Gastrocnemius medialis (tissue), 4 donors: ENCODE measurements at regions of chr4 and their contacts with region 1.

Region 1: DNA sequence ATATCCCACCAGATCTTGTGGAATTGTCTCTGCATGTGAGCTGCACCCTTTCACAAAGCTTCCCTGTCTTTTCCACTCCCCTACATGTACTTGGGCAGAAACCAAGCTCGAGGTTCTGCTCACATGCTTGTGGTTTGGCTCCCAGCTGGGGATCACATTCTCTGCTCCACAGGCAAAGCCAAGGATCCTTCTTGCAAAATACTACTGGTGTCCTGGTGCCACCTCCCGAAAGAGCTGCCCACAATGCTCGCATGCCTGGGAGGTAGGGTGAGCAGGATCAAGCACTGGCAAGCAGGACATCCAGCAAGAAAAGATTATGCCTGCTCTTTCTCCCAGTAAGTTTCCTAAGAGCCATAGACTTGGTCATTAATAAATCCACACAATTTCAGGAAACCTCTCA is 45.1 kb upstream of the PPARGC1A start:
- DNase-seq: peak; percentile 94 to 98
- ATAC-seq: peak; percentile 80 to 84
- H3K4me3 ChIP-seq: no peak overlapping the region
- H3K27ac ChIP-seq: peak overlapping the region; percentile 83 to 92 (median 90)
- H3K4me1 ChIP-seq: peaks cover 29 to 67% of the 10 kb centered on the region in 2 donors
- H3K27me3 ChIP-seq: no peaks in the 10 kb centered on the region
- CTCF ChIP-seq: no peak
- POLR2A ChIP-seq: peak; percentile 51 to 67

Region 2: GRCh38 chr4:23373261-23373660 is 561.7 kb before region 1 on chr4:
- in situ Hi-C with region 1: loop called in 1 of 4 experiments (anchors 25 kb)
- intact Hi-C with region 1: loop called (anchors 5 kb)
- DNase-seq: peak; percentile 41 to 65
- ATAC-seq: peak; percentile 67 to 76
- H3K4me3 ChIP-seq: no peak overlapping the region
- H3K27ac ChIP-seq: peak overlapping the region; percentile 75 to 82 (median 80)
- H3K4me1 ChIP-seq: peaks cover 28 to 32% of the 10 kb centered on the region in 2 donors
- H3K27me3 ChIP-seq: no peaks in the 10 kb centered on the region
- CTCF ChIP-seq: peak in 1 of 5 experiments; percentile 9
- POLR2A ChIP-seq: peak in 1 of 2 donors; percentile 17

Region 3: GRCh38 chr4:23392860-23393458 is 542.0 kb before region 1 on chr4:
- in situ Hi-C with region 1: loop called in 1 of 4 experiments (anchors 25 kb)
- intact Hi-C with region 1: loop called (anchors 5 kb)
- DNase-seq: peak; percentile 47 to 66
- ATAC-seq: peak; percentile 70 to 71
- H3K4me3 ChIP-seq: peak overlapping the region; percentile 38 to 53 (median 50)
- H3K27ac ChIP-seq: peak overlapping the region; percentile 76 to 89 (median 88)
- H3K4me1 ChIP-seq: peaks cover 45 to 52% of the 10 kb centered on the region in 2 donors
- H3K27me3 ChIP-seq: no peaks in the 10 kb centered on the region
- CTCF ChIP-seq: no peak
- POLR2A ChIP-seq: peak in 1 of 2 donors; percentile 37

Region 4: DNA sequence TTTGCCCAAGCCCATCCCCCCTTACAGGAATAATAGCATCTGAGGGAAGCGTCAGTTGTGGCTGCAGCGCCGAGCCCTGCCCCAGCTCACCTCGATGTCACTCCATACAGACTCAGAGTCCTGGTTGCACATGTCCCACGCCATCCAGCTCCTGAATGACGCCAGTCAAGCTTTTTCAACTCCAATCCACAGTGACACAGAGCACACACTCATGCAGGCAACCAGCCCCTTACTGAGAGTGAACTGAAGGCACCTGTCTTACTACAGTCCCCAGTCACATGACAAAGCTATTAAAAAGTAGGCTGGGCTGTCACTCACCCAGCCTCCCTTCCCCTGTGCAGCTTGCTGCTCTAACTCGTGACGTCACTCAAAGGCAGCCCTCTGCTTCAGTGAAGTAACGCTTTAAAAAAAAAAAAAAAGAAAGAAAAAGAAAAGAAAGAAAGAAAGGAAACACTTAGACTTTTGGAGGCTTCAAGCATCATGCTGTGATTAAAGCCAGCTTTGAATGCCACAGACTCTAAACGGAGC is 45.0 kb before region 1 on chr4 and contains the start of gene PPARGC1A:
- in situ Hi-C with region 1: no loop called
- intact Hi-C with region 1: loop called (anchors 1 kb)
- DNase-seq: peak; percentile 86 to 94
- ATAC-seq: peak; percentile 80 to 84
- H3K4me3 ChIP-seq: peak within 1 kb of the TSS; percentile 65 to 77 (median 69)
- H3K27ac ChIP-seq: peak within 1 kb of the TSS; percentile 84 to 99 (median 90)
- H3K4me1 ChIP-seq: peaks cover 27 to 42% of the 10 kb centered on the region in 2 donors
- H3K27me3 ChIP-seq: no peaks in the 10 kb centered on the region
- CTCF ChIP-seq: no peak
- POLR2A ChIP-seq: peak; percentile 96 to 98
- total RNA-seq, gene PPARGC1A: 30.6 to 68.9 (median 52.3) TPM

Region 5: DNA sequence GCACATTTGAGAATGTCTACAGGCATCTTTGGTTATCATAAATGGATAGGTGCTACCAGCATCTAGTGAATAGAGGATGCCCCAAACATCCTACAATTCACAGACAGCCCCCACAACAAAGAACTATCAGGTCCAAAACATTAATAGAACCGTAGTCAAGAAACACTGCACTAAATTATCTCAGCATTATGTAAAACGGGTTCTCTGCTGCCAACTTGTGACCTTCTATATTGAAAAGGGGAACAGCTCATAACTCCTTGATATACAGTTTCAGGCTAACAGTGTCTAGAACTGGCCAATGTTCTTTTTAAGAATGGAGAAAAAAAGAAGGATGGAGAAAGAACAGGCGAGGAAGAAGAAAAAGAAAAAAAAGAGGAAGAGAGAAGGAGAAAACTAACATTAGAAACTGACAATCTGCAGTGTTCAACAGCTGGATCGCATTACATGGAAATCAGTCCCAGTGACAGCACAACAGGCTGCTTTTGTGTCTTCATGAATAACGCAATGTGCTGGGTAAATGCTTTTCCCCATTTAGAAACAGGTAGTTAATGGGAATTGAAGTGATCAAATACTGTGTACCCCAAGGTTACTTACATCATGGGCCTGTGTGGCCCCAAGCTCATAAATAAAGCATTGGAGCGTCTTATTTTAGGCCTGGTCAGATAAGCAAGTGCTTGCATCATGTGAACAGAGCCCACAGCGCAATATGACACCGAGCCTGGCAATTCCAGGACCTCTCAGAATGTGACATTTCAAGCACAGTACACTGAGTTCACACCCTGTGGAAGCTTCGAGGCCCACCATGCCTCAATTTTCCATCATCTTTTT is 310.0 kb after region 1 on chr4:
- in situ Hi-C with region 1: loop called in 1 of 4 experiments (anchors 10 kb)
- intact Hi-C with region 1: loop called (anchors 5 kb)
- DNase-seq: peak; percentile 70 to 83
- ATAC-seq: peak; percentile 90 to 92
- H3K4me3 ChIP-seq: no peak overlapping the region
- H3K27ac ChIP-seq: peak overlapping the region; percentile 83 to 90 (median 86)
- H3K4me1 ChIP-seq: peaks cover 40 to 44% of the 10 kb centered on the region in 2 donors
- H3K27me3 ChIP-seq: no peaks in the 10 kb centered on the region
- CTCF ChIP-seq: no peak
- POLR2A ChIP-seq: peak in 1 of 2 donors; percentile 23

Region 6: GRCh38 chr4:24419181-24420034 is 484.5 kb after region 1 on chr4:
- in situ Hi-C with region 1: loop called in 1 of 4 experiments (anchors 25 kb)
- intact Hi-C with region 1: no loop called
- DNase-seq: peak; percentile 40 to 72
- ATAC-seq: peak; percentile 71 to 77
- H3K4me3 ChIP-seq: no peak overlapping the region
- H3K27ac ChIP-seq: peak overlapping the region in 1 of 4 donors; percentile 4
- H3K4me1 ChIP-seq: peaks cover 10 to 13% of the 10 kb centered on the region in 2 donors
- H3K27me3 ChIP-seq: no peaks in the 10 kb centered on the region
- CTCF ChIP-seq: peak; percentile 77 to 94 (median 89)
- POLR2A ChIP-seq: no peak